Activated naive CD4-positive, alpha-beta T cell treated with anti-CD3 and anti-CD28 coated beads for 36 hours (primary cell): ENCODE measurements at regions of chr9 and their contacts with region 1.

Region 1: DNA sequence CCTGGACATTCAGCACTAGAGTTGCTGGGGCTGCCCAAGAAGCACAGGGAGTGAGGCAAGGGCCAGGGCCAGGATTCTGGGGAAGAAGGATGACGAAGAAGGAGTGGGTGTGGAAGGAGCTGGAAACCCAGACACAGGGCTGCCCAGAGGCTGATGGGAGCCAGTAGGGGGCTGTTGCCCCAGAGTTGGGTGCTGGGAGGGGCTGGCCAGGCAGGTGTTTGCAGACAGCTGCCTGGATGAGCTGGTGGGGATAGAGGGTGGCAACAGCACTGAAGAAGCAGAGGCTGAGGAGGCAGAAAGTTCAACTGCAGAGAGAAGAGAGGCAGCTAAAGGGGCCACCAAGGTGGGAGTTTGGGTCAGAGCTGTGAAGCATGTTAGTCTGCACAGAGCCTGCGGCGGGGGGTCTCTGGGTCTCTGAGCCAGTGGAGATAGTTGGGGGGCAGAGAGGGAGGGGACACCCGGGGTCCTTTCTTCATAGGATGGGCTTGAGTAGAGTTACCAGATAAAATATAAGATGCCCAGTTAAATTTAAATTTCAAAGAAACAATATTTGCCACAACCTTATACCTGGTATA is 2.5 kb upstream of the AQP7 start:
- DNase-seq: no peak
- H3K4me3 Mint-ChIP-seq: no peak overlapping the region
- H3K27ac Mint-ChIP-seq: no peak overlapping the region
- H3K4me1 Mint-ChIP-seq: no peaks in the 10 kb centered on the region
- H3K27me3 Mint-ChIP-seq: no peaks in the 10 kb centered on the region

Region 2: GRCh38 chr9:33415501-33416038 is 10.7 kb after region 1 on chr9:
- CTCF ChIA-PET with region 1: interaction called, 24 read pairs
- intact Hi-C with region 1: loop called (anchors 1 kb)
- DNase-seq: peak; percentile 98
- H3K4me3 Mint-ChIP-seq: no peak overlapping the region
- H3K27ac Mint-ChIP-seq: peak overlapping the region; percentile 89
- H3K4me1 Mint-ChIP-seq: peaks cover 43% of the 10 kb centered on the region
- H3K27me3 Mint-ChIP-seq: no peaks in the 10 kb centered on the region

Region 3: DNA sequence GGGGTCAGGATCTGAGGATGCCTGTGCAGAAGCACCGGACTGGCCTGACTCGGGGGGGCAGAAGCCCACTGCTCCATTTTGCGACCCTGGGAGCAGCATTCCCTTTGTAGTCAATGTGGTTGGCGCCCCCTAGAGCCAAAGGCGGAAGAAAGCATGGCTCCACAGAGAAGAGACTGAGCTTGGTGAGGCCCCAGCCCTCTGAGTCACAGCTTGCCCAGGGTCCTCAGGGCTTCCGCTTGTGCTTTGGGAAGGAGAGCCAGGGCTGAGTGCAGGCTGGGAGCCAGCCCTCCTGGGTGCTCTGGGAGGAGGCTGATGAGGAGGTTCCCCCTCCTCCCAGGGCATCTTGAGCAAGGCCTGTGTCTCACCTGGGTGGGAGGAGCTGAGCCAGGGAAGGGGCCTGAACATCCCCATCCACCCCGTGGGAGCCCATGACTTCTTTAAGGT is 48.0 kb after region 1 on chr9:
- CTCF ChIA-PET with region 1: interaction called, 29 read pairs
- intact Hi-C with region 1: no loop called
- DNase-seq: peak; percentile 82
- H3K4me3 Mint-ChIP-seq: no peak overlapping the region
- H3K27ac Mint-ChIP-seq: peak overlapping the region; percentile 83
- H3K4me1 Mint-ChIP-seq: peaks cover 72% of the 10 kb centered on the region
- H3K27me3 Mint-ChIP-seq: no peaks in the 10 kb centered on the region

Region 4: DNA sequence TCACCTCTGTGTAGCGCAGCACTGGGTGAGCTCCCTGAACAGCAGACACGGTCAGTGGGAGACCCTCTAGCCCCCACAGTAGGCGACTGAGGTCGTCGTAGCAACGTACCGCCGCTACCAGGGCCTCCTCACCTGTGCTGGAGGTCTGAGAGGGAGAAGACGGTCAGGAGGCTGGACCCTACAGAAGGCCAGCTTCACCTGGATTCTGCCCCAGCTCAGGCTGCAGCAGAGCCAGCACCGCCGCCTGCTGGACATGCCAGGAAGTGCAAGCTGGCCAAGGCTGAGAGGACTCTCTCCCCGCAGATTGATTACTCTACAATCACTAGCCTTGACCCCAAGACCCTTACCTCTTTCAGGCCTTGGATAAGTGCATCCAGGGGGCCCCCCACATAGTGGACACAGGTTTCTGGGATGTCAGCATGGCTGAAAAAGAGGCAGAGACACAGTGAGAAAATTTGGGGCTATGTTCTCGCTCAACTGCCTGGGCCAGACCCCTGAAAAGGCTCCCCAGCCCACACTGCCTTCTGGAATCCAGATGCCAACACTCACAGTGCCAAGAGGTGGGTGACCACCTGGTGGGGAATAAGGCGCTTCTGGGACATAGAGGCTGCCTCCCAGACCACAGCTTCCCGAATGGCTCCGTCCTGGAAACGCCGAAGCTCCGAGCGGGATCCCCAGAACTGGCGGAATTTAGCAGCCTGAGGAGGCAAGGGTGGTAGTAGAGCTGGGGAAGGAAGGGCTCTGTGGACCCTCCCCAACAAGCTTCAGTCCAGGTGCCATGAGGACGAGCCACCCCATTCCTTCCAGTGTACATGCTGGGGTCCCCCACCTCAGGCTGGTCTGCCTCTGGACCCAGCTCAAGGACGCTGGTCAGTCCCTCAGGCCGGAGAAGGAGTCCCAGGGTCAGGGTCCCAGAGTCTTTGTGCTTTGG is 62.0 kb after region 1 on chr9:
- CTCF ChIA-PET with region 1: interaction called, 69 read pairs
- intact Hi-C with region 1: loop called (anchors 1 kb)
- DNase-seq: peak; percentile 81
- H3K4me3 Mint-ChIP-seq: no peak overlapping the region
- H3K27ac Mint-ChIP-seq: peak overlapping the region; percentile 24
- H3K4me1 Mint-ChIP-seq: peaks cover 16% of the 10 kb centered on the region
- H3K27me3 Mint-ChIP-seq: no peaks in the 10 kb centered on the region

Region 5: GRCh38 chr9:33517373-33517772 is 112.5 kb after region 1 on chr9:
- CTCF ChIA-PET with region 1: interaction called, 5 read pairs
- intact Hi-C with region 1: loop called (anchors 5 kb)
- DNase-seq: peak; percentile 19
- H3K4me3 Mint-ChIP-seq: no peak overlapping the region
- H3K27ac Mint-ChIP-seq: no peak overlapping the region
- H3K4me1 Mint-ChIP-seq: no peaks in the 10 kb centered on the region
- H3K27me3 Mint-ChIP-seq: peaks cover 12% of the 10 kb centered on the region

Region 6: DNA sequence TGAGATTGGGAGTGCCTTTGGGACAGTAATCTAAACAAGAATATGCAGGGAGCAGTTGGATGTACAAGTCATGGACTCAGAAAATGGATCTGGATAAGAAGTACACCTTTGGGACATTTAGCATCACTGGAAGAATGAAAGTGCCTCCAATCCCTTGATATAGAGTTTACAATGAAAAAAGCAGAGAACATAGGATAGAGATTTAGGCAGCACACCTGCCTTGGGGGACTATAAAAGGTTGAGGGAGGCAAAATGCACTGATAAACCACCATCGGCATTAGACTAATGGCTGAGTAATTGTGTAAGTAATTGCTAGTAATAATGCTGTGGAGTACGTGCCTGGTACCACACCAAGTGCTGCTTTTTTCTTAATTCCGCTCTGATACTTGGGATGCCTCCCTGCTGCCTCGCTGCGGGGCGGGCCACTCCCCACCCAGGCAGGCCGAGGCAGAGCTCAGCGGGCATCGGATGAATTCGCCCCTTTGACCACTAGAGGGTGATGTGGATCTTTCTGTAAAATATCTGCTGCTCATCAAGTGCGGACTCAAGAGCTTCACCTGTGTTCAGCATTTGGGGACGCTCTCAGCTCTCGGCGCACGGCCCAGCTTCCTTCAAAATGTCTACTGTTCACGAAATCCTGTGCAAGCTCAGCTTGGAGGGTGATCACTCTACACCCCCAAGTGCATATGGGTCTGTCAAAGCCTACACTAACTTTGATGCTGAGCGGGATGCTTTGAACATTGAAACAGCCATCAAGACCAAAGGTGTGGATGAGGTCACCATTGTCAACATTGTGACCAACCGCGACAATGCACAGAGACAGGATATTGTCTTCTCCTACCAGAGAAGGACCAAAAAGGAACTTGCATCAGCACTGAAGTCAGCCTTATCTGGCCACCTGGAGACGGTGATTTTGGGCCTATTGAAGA is 219.0 kb after region 1 on chr9:
- CTCF ChIA-PET with region 1: no interaction called
- intact Hi-C with region 1: loop called (anchors 5 kb)
- DNase-seq: peak; percentile 81
- H3K4me3 Mint-ChIP-seq: no peak overlapping the region
- H3K27ac Mint-ChIP-seq: no peak overlapping the region
- H3K4me1 Mint-ChIP-seq: peaks cover 8% of the 10 kb centered on the region
- H3K27me3 Mint-ChIP-seq: peaks cover 17% of the 10 kb centered on the region

Region 7: DNA sequence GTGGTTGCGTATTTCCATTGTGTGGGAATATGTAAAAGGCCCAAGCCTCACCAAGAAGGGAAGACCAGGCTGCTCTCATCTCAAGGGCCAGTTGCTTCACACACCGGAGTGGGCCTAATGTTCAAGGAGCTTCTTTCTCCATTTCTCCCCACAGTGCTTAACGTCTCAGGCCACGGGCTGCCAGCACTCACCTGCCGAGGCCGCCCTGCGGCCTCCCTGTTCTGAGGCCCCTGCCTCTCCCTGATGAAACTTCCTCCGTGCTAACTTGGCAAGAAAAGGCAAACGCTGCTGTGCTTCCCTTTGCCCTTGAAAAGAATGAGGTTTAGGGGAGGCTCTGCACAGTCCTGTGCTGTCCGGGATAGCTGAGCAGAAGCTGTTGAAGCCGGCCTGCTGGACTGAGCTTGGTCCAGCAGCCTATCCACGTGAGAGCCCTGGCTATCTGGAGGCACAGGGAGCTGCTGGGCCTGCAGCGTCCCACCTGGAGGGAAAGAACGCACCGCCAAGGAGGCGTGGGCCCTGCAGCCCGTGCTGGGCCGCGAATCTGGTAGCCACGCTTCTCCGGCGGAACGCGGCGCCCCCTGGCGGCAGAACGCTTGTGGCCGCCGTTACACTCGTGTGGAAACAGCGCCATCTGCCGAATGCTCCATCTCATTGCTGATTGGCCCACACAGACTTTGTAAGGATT is 316.9 kb after region 1 on chr9:
- CTCF ChIA-PET with region 1: no interaction called
- intact Hi-C with region 1: loop called (anchors 1 kb)
- DNase-seq: peak; percentile 90
- H3K4me3 Mint-ChIP-seq: no peak overlapping the region
- H3K27ac Mint-ChIP-seq: no peak overlapping the region
- H3K4me1 Mint-ChIP-seq: no peaks in the 10 kb centered on the region
- H3K27me3 Mint-ChIP-seq: peaks cover 7% of the 10 kb centered on the region